ENCODE measurements at regions of chr1 and their contacts with region 1.

Region 1: GRCh38 chr1:64675718-64676345 is 69.0 kb upstream of the RAVER2 start:
- DNase-seq: no peak
- ATAC-seq: no peak
- H3K4me3 ChIP-seq: no peak overlapping the region
- H3K27ac ChIP-seq: no peak overlapping the region
- H3K4me1 ChIP-seq: peaks cover 0 to 9% (median 0%) of the 10 kb centered on the region in 12 donors
- H3K27me3 ChIP-seq: no peaks in the 10 kb centered on the region
- CTCF ChIP-seq: peak; percentile 58 to 85 (median 72)
- POLR2A ChIP-seq: no peak

Region 2: GRCh38 chr1:64246294-64246917 is 429.4 kb before region 1 on chr1:
- intact Hi-C with region 1: no loop called
- DNase-seq: no peak
- ATAC-seq: peak in 2 of 4 donors; percentile 28 to 50
- H3K4me3 ChIP-seq: no peak overlapping the region
- H3K27ac ChIP-seq: no peak overlapping the region
- H3K4me1 ChIP-seq: peaks cover 0 to 16% (median 3%) of the 10 kb centered on the region in 12 donors
- H3K27me3 ChIP-seq: no peaks in the 10 kb centered on the region
- CTCF ChIP-seq: peak; percentile 68 to 84 (median 78)
- POLR2A ChIP-seq: no peak

Region 3: GRCh38 chr1:64378826-64379225 is 297.0 kb before region 1 on chr1:
- intact Hi-C with region 1: loop called in 4 of 10 experiments (anchors 10 kb)
- DNase-seq: no peak
- ATAC-seq: no peak
- H3K4me3 ChIP-seq: no peak overlapping the region
- H3K27ac ChIP-seq: no peak overlapping the region
- H3K4me1 ChIP-seq: no peaks in the 10 kb centered on the region
- H3K27me3 ChIP-seq: no peaks in the 10 kb centered on the region
- CTCF ChIP-seq: peak in 10 of 12 donors; percentile 9 to 45 (median 31)
- POLR2A ChIP-seq: no peak

Region 4: DNA sequence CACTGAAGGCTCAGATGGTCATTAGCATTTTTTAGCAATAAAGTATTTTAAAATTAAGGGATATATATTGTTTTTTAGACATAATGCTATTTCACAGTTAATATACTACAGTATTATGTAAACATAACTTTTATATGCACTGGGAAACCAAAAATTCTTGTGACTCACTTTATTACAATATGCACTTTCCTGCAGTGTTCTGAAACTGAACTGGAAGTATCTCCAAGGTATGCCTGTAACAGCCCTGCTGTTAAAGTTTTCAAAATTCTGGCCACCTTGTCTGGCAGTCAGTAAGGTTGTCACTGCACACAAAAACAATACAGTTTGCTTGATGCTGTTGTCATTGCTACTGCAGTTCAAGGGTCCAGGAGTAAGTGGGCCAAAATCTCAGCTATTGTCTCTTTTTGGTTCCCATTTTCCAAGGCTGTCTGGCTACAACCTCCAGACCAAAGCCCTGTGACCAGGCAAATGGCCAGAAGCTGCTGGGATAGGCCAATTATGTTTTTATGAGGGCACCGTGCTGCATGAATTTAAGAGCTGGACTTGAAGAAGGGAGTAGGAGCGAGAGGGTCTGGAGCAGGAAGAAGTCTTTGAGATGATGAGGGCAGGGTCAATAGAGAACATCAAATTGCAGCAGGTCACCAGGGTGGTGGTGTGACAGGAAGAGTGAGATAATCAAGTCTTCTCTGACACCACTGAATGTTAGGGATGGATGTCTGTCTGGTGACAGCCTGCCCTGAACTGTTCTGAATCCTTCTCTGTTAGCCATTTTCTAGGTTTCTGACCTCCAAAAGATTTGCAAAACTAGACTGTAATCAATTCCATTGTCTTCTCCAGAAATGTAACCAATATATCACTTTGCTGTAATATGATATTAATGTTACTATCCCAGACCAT is 288.2 kb before region 1 on chr1:
- intact Hi-C with region 1: loop called in 2 of 10 experiments (anchors 10 kb)
- DNase-seq: peak in 1 of 5 donors; percentile 18
- ATAC-seq: no peak
- H3K4me3 ChIP-seq: no peak overlapping the region
- H3K27ac ChIP-seq: peak overlapping the region in 3 of 12 donors; percentile 18 to 45 (median 41)
- H3K4me1 ChIP-seq: peaks cover 0 to 9% (median 0%) of the 10 kb centered on the region in 12 donors
- H3K27me3 ChIP-seq: no peaks in the 10 kb centered on the region
- CTCF ChIP-seq: no peak
- POLR2A ChIP-seq: no peak

Region 5: GRCh38 chr1:64594446-64594845 is 81.4 kb before region 1 on chr1:
- intact Hi-C with region 1: no loop called
- DNase-seq: no peak
- ATAC-seq: no peak
- H3K4me3 ChIP-seq: no peak overlapping the region
- H3K27ac ChIP-seq: no peak overlapping the region
- H3K4me1 ChIP-seq: peaks cover 0 to 17% (median 2%) of the 10 kb centered on the region in 12 donors
- H3K27me3 ChIP-seq: no peaks in the 10 kb centered on the region
- CTCF ChIP-seq: no peak
- POLR2A ChIP-seq: no peak

Region 6: GRCh38 chr1:64645741-64646140 is 30.1 kb before region 1 on chr1:
- intact Hi-C with region 1: no loop called
- DNase-seq: no peak
- ATAC-seq: no peak
- H3K4me3 ChIP-seq: no peak overlapping the region
- H3K27ac ChIP-seq: no peak overlapping the region
- H3K4me1 ChIP-seq: no peaks in the 10 kb centered on the region
- H3K27me3 ChIP-seq: no peaks in the 10 kb centered on the region
- CTCF ChIP-seq: no peak
- POLR2A ChIP-seq: no peak

Measured in heart left ventricle (tissue), 16 donors.